Posterior cingulate gyrus (tissue), 11 donors: ENCODE measurements at regions of chr10 and their contacts with region 1.

Region 1: GRCh38 chr10:18214691-18215563 is 74.7 kb downstream of the CACNB2 start:
- DNase-seq: peak in 5 of 10 donors; percentile 29 to 68 (median 55)

Region 2: GRCh38 chr10:17607603-17608332 is 607.2 kb before region 1 on chr10:
- intact Hi-C with region 1: loop called (anchors 1 kb)
- DNase-seq: no peak

Region 3: GRCh38 chr10:17742918-17743317 is 472.0 kb before region 1 on chr10:
- intact Hi-C with region 1: loop called (anchors 10 kb)
- DNase-seq: peak in 7 of 10 donors; percentile 46 to 91 (median 67)

Region 4: DNA sequence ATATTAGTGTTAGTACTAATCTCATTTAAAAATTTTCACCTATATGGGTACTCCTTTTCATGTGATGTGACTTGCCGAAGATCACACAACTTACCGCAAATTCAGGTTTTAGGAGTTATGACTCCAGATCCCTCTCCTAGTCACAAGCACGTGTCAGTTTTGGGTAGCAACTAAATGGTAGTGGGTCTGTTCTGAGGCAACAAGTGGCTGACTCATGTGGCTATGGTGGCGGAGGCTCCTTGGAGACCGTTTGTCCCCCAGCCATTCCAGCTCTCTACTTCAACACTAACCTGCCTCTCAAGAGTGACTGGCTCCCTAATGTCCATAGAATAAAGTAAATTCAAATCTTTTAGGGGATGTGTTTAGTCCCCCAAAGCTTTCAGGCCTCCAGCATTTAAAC is 366.3 kb before region 1 on chr10:
- intact Hi-C with region 1: loop called (anchors 1 kb)
- DNase-seq: no peak

Region 5: DNA sequence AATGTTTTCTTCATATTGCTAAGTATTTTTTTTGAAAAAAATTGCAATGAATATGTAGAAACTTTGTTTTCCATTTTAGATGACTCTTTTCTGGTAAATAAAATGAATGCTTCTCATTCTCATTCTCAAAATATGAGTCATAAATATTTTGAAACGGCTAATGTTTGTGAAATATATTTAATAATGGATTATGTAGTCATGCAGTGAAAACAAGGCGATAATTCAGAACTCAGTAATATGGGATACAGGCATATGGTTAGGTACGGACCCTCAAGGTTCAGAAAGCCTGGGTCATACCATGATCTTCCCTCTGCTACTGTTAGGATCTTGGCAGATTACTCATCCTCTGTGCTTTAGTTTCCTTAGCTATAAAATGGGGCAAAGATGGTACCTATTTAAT is 309.4 kb before region 1 on chr10:
- intact Hi-C with region 1: loop called (anchors 10 kb)
- DNase-seq: no peak